ENCODE measurements at regions of chr7 and their contacts with region 1.

Region 1: DNA sequence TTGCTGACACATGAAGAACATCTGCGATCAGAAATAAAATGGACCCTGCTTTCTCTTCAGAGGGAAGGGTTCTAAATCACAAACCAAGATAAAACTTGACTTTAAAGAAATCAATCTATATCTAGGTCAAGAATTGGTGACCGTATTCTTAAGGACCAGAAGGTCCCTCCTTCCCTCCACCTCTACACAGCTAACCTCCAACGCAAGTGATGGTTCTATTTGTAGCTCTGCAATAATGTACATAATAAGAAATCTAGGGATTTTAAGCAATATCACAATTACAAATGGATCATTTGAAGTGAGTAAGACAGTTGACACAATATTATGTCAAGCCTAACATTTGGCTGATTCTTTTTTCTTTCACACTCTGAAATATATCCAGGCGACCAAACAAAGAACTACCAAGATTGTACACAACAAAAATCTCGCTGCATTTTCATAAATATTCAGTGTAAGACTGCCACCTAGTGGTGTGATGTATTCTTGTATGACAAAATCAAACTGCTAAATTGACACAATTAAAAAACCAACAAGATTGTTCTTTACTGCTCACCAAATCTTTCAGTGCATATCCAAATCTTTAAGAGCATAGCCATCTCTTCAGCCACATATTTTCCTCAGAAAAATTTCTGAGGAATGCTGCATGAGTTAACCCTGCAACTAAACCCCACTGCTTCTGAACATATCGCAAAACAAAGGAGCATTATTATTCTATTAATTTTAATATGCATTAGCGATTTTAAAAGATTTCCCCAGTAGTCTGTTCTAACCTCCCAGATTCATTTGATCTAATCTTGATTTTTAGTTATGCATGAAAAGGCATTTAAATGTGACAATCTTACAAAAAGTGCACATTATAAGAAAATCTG is 44.5 kb downstream of the ICA1 start:
- DNase-seq: peak; percentile 52
- CTCF ChIP-seq: peak; percentile 43

Region 2: DNA sequence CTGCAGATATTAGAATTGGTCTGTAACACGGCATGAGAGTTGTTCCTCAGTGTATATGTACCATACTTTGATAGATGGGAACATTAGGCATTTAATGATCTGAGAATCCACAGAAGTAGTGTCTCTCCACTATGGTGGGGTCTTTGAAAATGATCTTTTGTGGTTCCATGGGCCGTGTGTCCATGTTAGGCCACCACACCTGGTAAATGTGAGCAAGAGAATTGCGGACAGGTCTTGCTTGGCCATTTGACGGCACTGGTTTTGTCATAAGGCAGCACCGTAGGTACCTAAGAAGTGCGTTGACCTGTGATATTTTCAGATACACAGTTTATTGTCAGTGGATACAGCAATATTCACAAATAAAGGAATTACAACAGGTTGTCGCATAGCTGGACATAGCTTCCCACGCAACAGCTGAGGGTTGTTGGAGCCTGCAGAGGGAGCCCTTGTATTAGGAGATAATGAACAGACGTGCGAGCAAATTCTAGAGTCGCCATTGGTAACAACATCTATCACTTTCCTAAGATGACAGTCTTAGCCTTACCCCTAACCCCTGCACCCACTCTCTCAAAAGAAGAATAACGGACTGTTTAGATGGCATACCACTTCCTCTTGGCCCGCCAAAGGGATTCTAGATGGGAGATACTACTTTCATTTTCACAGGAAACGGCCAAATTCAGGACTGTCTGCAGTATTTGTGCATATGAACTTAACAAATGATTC is 793.1 kb before region 1 on chr7:
- CTCF ChIA-PET with region 1: interaction called, 13 read pairs
- POLR2A ChIA-PET with region 1: no interaction called
- DNase-seq: peak; percentile 47
- CTCF ChIP-seq: peak; percentile 74

Region 3: DNA sequence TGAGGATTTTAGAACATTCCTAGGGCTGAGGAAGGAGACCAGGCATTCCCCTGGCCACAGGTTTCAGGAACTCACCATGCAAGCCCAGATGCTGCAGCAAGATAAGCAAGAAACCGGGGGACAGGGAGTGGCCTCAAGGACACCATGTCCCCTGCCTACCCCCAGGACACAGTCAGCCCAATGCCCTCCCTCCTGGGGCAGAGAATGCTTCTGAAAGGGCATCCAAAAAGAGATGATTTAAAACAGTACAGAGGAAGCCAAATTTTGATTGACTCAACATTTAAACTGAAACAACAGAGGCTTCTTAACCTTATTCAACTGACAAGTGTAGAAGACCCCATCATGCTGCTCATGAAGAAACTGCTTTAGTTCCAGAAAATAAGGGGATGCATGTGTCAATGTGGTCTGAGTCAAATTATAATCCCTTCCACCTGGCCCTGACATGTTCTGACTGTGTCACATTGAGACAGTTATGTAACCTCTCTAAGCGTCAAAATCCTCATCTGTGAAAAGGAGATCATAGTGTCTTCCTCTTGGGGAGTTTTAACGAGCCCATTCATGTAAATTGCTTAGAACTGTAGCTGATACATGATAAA is 15.5 kb before region 1 on chr7:
- CTCF ChIA-PET with region 1: interaction called, 18 read pairs
- POLR2A ChIA-PET with region 1: no interaction called
- DNase-seq: no peak
- CTCF ChIP-seq: no peak